ENCODE measurements at regions of chr14 and their contacts with region 1.

Region 1: DNA sequence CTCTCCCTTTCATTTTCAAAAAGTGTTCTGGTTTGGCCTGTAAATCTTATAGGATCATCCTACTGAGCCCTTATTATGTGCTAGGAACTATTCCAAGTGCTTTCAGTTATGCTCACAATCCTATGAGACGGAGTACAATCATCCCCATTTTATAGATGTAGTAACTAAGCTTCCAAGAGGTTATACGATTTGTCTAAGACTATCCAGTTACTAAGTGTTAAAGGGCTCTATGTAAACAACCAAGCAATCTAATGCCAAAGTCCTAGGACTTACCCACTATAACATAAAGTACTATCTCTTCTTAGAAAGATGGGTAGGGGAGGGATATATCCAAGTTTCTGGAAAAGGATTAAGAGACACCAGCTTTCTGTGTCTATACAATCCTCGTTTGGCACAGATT is 6.7 kb downstream of the CFL2 start:
- DNase-seq: no peak
- CTCF ChIP-seq: no peak

Region 2: DNA sequence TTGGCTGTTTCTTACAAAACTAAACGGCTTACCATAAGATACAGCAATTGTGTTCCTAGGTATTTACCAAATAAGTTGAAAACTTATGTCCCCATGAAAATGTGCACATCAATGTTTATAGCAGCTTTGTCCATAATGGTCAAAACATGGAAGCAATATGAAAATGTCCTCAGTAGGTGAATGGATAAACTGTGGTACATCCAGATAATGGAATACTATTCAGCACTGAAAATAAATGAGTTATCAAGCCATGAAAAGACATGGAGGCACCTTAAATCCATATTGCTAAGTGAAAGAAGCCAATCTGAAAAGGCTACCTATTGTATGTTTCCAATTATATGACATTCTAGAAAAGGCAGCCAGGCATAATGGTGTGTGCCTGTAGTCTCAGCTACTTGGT is 34.0 kb before region 1 on chr14:
- CTCF ChIA-PET with region 1: interaction called, 17 read pairs
- POLR2A ChIA-PET with region 1: no interaction called
- DNase-seq: no peak
- CTCF ChIP-seq: no peak

Region 3: DNA sequence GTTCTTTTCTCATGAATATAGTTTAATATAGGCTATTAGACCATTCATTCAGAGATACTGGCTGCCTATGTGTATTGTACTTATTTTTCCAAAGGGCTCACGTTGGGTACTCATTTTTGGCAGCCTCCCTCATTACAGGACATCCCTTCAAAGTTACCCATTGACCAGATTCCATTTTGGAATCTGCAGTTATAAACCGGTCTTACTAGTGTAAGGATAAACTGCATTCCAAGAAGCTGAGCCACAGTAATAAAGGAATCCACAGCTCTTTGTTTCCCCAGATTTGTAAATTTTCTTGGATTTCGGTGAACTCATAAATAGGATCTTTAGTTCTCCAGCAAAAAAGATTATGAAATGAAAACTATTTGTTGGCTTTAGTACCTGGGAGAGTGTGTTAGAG is 25.5 kb after region 1 on chr14:
- CTCF ChIA-PET with region 1: no interaction called
- POLR2A ChIA-PET with region 1: no interaction called
- DNase-seq: no peak
- CTCF ChIP-seq: no peak